ENCODE measurements at regions of chr16 and their contacts with region 1.

Region 1: GRCh38 chr16:84726079-84726668 is 26.4 kb downstream of the USP10 start:
- DNase-seq: no peak
- ATAC-seq: peak; percentile 66
- H3K4me3 ChIP-seq: peak overlapping the region; percentile 66
- H3K27ac ChIP-seq: peak overlapping the region; percentile 66
- H3K4me1 ChIP-seq: peaks cover 44% of the 10 kb centered on the region
- H3K27me3 ChIP-seq: no peaks in the 10 kb centered on the region
- CTCF ChIP-seq: peak; percentile 90 to 96 (median 91)
- EP300 ChIP-seq: 0 out of 4 replicates have a peak, but pooled peaks of 1 of the 2 experiments have one; percentile 18
- POLR2A ChIP-seq: peak; percentile 32; the same call in 1 of the 2 replicates
- RAD21 ChIP-seq: peak; percentile 84

Region 2: DNA sequence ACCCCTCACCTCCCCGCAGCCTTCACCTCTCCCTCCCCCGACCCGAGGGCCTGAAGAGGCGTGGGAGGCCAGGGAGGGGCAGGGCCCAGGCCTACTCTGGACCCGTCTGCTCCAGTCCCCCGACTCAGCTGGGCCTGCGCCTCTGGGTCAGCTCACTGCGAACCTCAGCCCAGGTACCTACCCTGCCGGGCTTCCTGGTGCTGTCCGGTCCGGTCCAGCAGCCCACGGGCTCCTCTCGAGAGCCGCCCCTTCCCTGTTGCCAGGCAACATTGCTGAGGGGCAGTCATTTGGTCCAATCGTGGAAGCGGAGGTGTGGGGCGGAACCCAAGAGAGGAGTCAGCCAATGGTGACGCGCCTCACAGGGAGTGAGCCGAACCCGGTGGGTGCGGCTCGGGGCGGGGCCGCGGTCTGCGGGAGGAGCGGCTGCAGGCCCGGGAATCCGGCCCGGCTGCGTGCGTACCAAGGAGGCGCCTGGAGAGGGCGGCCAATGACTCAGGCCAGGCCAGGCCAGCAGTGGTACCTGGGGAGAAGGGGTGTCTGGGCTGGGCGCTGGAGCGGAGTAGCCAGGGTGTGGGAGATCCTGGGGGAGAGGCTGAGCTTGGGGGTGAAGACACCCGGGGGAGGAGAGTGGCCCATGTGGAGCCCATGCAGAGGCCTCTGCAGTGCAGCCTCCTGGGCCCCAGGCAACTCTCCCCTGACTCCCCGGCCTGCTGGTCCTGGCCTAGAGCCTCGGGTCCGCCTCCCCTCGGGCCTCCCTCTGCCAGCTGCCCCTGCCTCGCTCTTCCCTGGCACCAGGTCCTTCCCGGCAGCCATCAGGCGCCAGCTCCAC is 221.5 kb before region 1 on chr16 and contains the start of gene MEAK7:
- CTCF ChIA-PET with region 1: interaction called, 55 read pairs
- POLR2A ChIA-PET with region 1: no interaction called
- RAD21 ChIA-PET with region 1: interaction called, 62 read pairs
- SMC1A ChIA-PET with region 1: interaction called, 9 read pairs
- in situ Hi-C with region 1: no loop called
- intact Hi-C with region 1: no loop called
- DNase-seq: peak; percentile 86
- ATAC-seq: peak; percentile 91
- H3K4me3 ChIP-seq: peak within 1 kb of the TSS; percentile 88
- H3K27ac ChIP-seq: peak within 1 kb of the TSS; percentile 82
- H3K4me1 ChIP-seq: peaks cover 50% of the 10 kb centered on the region
- H3K27me3 ChIP-seq: no peaks in the 10 kb centered on the region
- CTCF ChIP-seq: peak in 1 of 3 experiments; percentile 13; a peak in 1 of 6 replicates
- EP300 ChIP-seq: no peak
- POLR2A ChIP-seq: peak; percentile 78
- RAD21 ChIP-seq: no peak
- polyA plus RNA-seq, gene MEAK7: 1.4 to 1.5 TPM

Region 3: GRCh38 chr16:84629580-84629979 is 96.6 kb before region 1 on chr16:
- CTCF ChIA-PET with region 1: interaction called, 158 read pairs
- POLR2A ChIA-PET with region 1: interaction called, 5 read pairs
- RAD21 ChIA-PET with region 1: interaction called, 67 read pairs
- SMC1A ChIA-PET with region 1: interaction called, 88 read pairs
- in situ Hi-C with region 1: loop called (anchors 5 kb)
- intact Hi-C with region 1: no loop called
- DNase-seq: no peak
- ATAC-seq: no peak
- H3K4me3 ChIP-seq: no peak overlapping the region
- H3K27ac ChIP-seq: no peak overlapping the region
- H3K4me1 ChIP-seq: peaks cover 29% of the 10 kb centered on the region
- H3K27me3 ChIP-seq: no peaks in the 10 kb centered on the region
- CTCF ChIP-seq: no peak
- EP300 ChIP-seq: no peak
- POLR2A ChIP-seq: no peak
- RAD21 ChIP-seq: no peak

Region 4: DNA sequence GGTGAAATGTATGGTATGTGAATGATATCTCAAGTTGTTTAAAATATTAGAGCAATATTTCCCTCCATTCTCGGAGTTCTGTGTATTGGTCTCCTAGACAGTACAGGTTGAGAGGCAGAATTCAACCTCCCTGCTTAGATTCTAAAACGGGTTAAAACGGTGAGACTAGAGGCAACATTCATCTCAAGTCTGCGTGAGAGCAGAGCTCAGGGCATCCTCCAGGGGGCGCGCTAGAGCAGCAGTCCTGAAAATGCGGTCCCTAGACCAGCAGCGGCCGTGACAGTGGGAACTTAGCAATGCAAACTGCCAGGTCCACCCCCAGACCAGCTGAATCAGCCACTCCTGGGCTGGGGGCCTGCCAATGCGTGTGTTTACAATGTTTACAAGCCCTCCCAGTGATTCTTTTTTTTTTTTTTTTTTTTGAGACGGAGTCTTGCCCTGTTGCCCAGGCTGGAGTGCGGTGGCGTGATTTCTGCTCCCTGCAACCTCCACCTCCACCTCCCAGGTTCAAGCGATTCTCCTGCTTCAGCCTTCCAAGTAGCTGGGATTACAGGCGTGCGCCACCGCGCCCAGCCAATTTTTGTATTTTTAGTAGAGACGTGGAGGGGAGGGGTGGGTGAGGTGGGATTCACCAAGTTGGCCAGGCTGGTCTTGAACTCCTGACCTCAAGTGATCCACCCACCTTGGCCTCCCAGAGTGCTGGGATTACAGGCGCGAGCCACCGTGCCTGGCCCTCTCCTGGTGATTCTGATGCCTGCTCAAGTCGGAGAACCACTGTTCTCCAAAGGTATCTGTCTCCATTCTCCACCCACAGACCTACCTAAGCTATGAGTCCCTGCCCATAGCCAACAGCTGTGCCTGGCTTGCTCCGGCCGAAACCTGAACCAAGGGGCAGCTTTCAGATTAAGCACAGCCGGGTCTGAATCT is 53.6 kb before region 1 on chr16:
- CTCF ChIA-PET with region 1: interaction called, 102 read pairs
- POLR2A ChIA-PET with region 1: interaction called, 4 read pairs
- RAD21 ChIA-PET with region 1: interaction called, 37 read pairs
- SMC1A ChIA-PET with region 1: interaction called, 65 read pairs
- in situ Hi-C with region 1: no loop called
- intact Hi-C with region 1: loop called (anchors 1 kb)
- DNase-seq: no peak
- ATAC-seq: peak; percentile 98
- H3K4me3 ChIP-seq: no peak overlapping the region
- H3K27ac ChIP-seq: no peak overlapping the region
- H3K4me1 ChIP-seq: no peaks in the 10 kb centered on the region
- H3K27me3 ChIP-seq: no peaks in the 10 kb centered on the region
- CTCF ChIP-seq: peak; percentile 86 to 95 (median 93)
- EP300 ChIP-seq: no peak
- POLR2A ChIP-seq: no peak
- RAD21 ChIP-seq: peak; percentile 74

Region 5: GRCh38 chr16:84699712-84700445 is 26.3 kb before region 1 on chr16 and contains the start of gene USP10:
- CTCF ChIA-PET with region 1: interaction called, 61 read pairs
- POLR2A ChIA-PET with region 1: interaction called, 9 read pairs
- RAD21 ChIA-PET with region 1: interaction called, 27 read pairs
- SMC1A ChIA-PET with region 1: interaction called, 21 read pairs
- in situ Hi-C with region 1: no loop called
- intact Hi-C with region 1: loop called (anchors 2 kb)
- DNase-seq: no peak
- ATAC-seq: peak; percentile 82
- H3K4me3 ChIP-seq: peak within 1 kb of the TSS; percentile 91
- H3K27ac ChIP-seq: peak within 1 kb of the TSS; percentile 86
- H3K4me1 ChIP-seq: peaks cover 3% of the 10 kb centered on the region; the same call in 1 of the 2 replicates
- H3K27me3 ChIP-seq: no peaks in the 10 kb centered on the region
- CTCF ChIP-seq: no peak
- EP300 ChIP-seq: no peak
- POLR2A ChIP-seq: peak; percentile 93
- RAD21 ChIP-seq: no peak
- polyA plus RNA-seq, gene USP10: 46.1 to 47.7 TPM

Region 6: GRCh38 chr16:84754353-84754856 is 28.2 kb after region 1 on chr16:
- CTCF ChIA-PET with region 1: interaction called, 29 read pairs
- POLR2A ChIA-PET with region 1: interaction called, 3 read pairs
- RAD21 ChIA-PET with region 1: interaction called, 13 read pairs
- SMC1A ChIA-PET with region 1: interaction called, 129 read pairs
- in situ Hi-C with region 1: no loop called
- intact Hi-C with region 1: no loop called
- DNase-seq: peak; percentile 78
- ATAC-seq: peak; percentile 82
- H3K4me3 ChIP-seq: no peak overlapping the region; the same call in 1 of the 2 replicates
- H3K27ac ChIP-seq: peak overlapping the region; percentile 56
- H3K4me1 ChIP-seq: peaks cover 54% of the 10 kb centered on the region
- H3K27me3 ChIP-seq: no peaks in the 10 kb centered on the region
- CTCF ChIP-seq: peak; percentile 70 to 85 (median 80)
- EP300 ChIP-seq: no peak
- POLR2A ChIP-seq: no peak
- RAD21 ChIP-seq: peak; percentile 81

Region 7: GRCh38 chr16:84841770-84842300 is 115.7 kb after region 1 on chr16:
- CTCF ChIA-PET with region 1: no interaction called
- POLR2A ChIA-PET with region 1: no interaction called
- RAD21 ChIA-PET with region 1: no interaction called
- SMC1A ChIA-PET with region 1: no interaction called
- in situ Hi-C with region 1: no loop called
- intact Hi-C with region 1: no loop called
- DNase-seq: no peak
- ATAC-seq: no peak
- H3K4me3 ChIP-seq: no peak overlapping the region
- H3K27ac ChIP-seq: no peak overlapping the region
- H3K4me1 ChIP-seq: no peaks in the 10 kb centered on the region
- H3K27me3 ChIP-seq: peaks cover 4 to 6% of the 10 kb centered on the region in 2 experiments; a peak in 3 of 4 replicates
- CTCF ChIP-seq: no peak
- EP300 ChIP-seq: no peak
- POLR2A ChIP-seq: no peak
- RAD21 ChIP-seq: no peak

Measured in GM12878 (cell line).